GM12878 (cell line): ENCODE measurements at regions of chr11 and their contacts with region 1.

Region 1: GRCh38 chr11:13052130-13052605 is 43.1 kb downstream of the RASSF10 start:
- DNase-seq: no peak
- ATAC-seq: peak; percentile 43
- H3K4me3 ChIP-seq: no peak overlapping the region
- H3K27ac ChIP-seq: no peak overlapping the region
- H3K4me1 ChIP-seq: no peaks in the 10 kb centered on the region
- H3K27me3 ChIP-seq: no peaks in the 10 kb centered on the region
- CTCF ChIP-seq: no peak
- EP300 ChIP-seq: no peak
- POLR2A ChIP-seq: no peak
- RAD21 ChIP-seq: no peak

Region 2: DNA sequence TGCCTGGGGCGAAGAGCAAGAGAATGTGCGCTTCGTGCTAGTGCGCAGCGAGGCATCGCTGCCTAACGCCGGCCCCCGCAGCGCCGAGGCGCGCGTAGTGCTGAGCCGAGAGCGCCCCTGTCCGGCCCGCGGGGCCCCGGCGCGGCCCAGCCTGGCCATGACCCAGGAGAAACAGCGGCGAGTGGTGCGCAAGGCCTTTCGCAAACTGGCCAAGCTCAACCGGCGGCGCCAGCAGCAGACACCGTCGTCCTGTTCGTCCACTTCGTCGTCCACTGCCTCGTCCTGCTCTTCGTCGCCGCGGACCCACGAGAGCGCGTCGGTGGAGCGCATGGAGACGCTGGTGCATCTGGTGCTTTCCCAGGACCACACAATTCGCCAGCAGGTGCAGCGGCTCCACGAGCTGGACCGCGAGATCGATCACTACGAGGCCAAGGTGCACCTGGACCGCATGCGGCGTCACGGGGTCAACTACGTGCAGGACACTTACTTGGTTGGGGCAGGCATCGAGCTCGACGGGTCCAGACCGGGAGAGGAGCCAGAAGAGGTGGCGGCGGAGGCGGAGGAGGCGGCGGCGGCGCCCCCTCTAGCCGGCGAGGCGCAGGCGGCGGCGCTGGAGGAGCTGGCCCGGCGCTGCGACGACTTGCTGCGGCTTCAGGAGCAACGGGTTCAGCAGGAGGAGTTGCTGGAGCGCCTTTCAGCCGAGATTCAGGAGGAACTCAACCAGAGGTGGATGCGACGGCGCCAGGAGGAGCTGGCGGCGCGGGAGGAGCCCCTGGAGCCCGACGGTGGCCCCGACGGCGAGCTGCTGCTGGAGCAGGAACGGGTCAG is 42.0 kb before region 1 on chr11:
- CTCF ChIA-PET with region 1: no interaction called
- POLR2A ChIA-PET with region 1: interaction called, 4 read pairs
- RAD21 ChIA-PET with region 1: interaction called, 3 read pairs
- SMC1A ChIA-PET with region 1: interaction called, 16 read pairs
- in situ Hi-C with region 1: no loop called
- intact Hi-C with region 1: no loop called
- DNase-seq: no peak
- ATAC-seq: no peak
- H3K4me3 ChIP-seq: no peak overlapping the region
- H3K27ac ChIP-seq: no peak overlapping the region
- H3K4me1 ChIP-seq: no peaks in the 10 kb centered on the region
- H3K27me3 ChIP-seq: peaks cover 0 to 4% of the 10 kb centered on the region in 2 experiments; a peak in 3 of 4 replicates
- CTCF ChIP-seq: no peak; a peak in 1 of 6 replicates
- EP300 ChIP-seq: no peak
- POLR2A ChIP-seq: no peak
- RAD21 ChIP-seq: no peak

Region 3: GRCh38 chr11:13064593-13064992 is 12.4 kb after region 1 on chr11:
- CTCF ChIA-PET with region 1: interaction called, 3 read pairs
- POLR2A ChIA-PET with region 1: interaction called, 3 read pairs
- RAD21 ChIA-PET with region 1: interaction called, 4 read pairs
- SMC1A ChIA-PET with region 1: interaction called, 11 read pairs
- in situ Hi-C with region 1: no loop called
- intact Hi-C with region 1: no loop called
- DNase-seq: no peak
- ATAC-seq: no peak
- H3K4me3 ChIP-seq: no peak overlapping the region
- H3K27ac ChIP-seq: no peak overlapping the region
- H3K4me1 ChIP-seq: no peaks in the 10 kb centered on the region
- H3K27me3 ChIP-seq: no peaks in the 10 kb centered on the region; a peak in 2 of 4 replicates
- CTCF ChIP-seq: no peak
- EP300 ChIP-seq: no peak
- POLR2A ChIP-seq: no peak
- RAD21 ChIP-seq: no peak

Region 4: DNA sequence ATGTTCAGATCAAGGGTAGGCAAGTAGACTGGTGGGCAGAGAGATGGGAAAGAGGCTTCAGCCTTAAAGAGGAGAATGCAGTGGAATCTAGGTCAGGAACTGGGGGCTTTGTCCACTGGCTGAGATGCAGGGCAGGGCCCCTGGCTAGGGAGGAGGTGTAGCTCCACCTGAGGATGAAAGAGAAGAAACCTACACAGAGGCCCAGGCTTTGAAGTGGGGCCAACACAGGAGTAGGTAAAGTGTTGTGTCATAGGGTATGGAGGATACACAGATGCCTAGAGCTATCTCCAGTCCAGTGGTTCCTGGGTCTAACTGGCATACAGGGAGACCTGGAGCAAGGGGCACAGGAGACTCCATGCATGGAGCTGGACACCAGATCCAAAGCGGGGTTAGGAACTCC is 30.4 kb after region 1 on chr11:
- CTCF ChIA-PET with region 1: no interaction called
- POLR2A ChIA-PET with region 1: no interaction called
- RAD21 ChIA-PET with region 1: no interaction called
- SMC1A ChIA-PET with region 1: no interaction called
- in situ Hi-C with region 1: no loop called
- intact Hi-C with region 1: no loop called
- DNase-seq: no peak
- ATAC-seq: no peak
- H3K4me3 ChIP-seq: no peak overlapping the region
- H3K27ac ChIP-seq: no peak overlapping the region
- H3K4me1 ChIP-seq: no peaks in the 10 kb centered on the region
- H3K27me3 ChIP-seq: no peaks in the 10 kb centered on the region; a peak in 2 of 4 replicates
- CTCF ChIP-seq: no peak
- EP300 ChIP-seq: no peak
- POLR2A ChIP-seq: no peak
- RAD21 ChIP-seq: no peak

Region 5: DNA sequence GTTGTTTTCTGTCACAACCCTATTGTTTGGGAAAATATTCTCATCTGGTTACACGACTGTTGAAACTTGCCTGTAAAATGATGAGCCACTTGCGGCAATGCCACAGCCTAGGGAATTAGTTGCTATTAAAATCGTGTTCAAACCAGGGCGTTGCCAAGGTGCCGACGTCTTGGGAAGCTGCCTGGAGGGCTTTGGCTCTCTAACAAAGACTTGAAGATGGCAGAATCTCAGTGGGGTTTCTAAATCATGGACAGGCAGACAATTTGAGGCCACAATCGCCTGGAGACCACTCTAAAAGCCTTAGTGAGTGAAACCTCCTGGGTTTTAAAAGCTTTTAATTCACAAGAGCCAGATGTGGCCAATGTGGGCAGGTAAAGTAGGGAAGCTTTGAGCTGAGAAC is 108.2 kb after region 1 on chr11:
- CTCF ChIA-PET with region 1: no interaction called
- POLR2A ChIA-PET with region 1: no interaction called
- RAD21 ChIA-PET with region 1: no interaction called
- SMC1A ChIA-PET with region 1: no interaction called
- in situ Hi-C with region 1: no loop called
- intact Hi-C with region 1: no loop called
- DNase-seq: no peak
- ATAC-seq: no peak; the same call in 2 of the 3 replicates
- H3K4me3 ChIP-seq: no peak overlapping the region
- H3K27ac ChIP-seq: no peak overlapping the region
- H3K4me1 ChIP-seq: no peaks in the 10 kb centered on the region
- H3K27me3 ChIP-seq: no peaks in the 10 kb centered on the region
- CTCF ChIP-seq: no peak
- EP300 ChIP-seq: no peak
- POLR2A ChIP-seq: no peak
- RAD21 ChIP-seq: no peak